Posterior cingulate gyrus (tissue), 11 donors: ENCODE measurements at regions of chr11 and their contacts with region 1.

Region 1: GRCh38 chr11:120511116-120511819 is at the start of gene GRIK4:
- DNase-seq: peak; percentile 78 to 98 (median 92)

Region 2: DNA sequence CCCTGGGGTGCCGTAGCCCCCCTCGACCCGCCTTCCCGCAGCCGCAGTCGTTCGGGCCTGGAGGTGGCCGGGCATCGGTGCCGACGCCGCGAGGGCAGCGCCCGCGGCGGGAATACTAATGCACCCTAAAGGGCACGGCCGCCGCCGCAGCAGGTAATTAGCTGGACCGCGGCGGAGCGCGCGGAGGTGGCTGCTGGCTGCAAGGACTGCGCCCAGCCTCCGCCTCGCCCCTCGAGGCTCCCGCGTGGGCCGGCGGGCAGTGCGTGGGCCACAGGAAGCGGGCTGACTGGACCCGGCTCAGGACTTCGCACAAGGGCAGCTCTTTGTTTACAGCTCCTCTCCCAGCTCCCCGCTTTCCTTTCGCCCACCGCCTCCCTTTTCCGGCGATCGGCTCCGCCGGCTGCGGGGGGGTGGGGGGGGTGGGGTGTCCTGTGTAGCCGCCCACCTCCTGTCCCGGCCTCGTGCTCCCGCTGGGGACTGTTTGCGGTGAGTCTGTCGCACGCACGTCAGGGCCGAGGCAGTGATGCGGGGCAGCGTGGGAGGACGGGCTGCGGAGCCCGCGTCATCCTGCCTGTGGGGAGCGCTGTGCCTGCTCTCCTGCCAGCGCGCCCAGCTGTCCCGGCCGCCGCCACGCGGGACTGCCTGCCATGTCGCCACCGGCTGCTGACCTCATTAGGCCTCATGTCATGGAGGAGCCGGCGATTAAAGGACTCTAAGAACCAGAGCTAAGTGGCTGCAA is 53.5 kb after region 1 on chr11:
- intact Hi-C with region 1: loop called (anchors 5 kb)
- DNase-seq: peak; percentile 61 to 97 (median 75)

Region 3: GRCh38 chr11:120696597-120697218 is 185.4 kb after region 1 on chr11:
- intact Hi-C with region 1: no loop called
- DNase-seq: no peak

Region 4: GRCh38 chr11:120801801-120802689 is 290.8 kb after region 1 on chr11:
- intact Hi-C with region 1: loop called (anchors 1 kb)
- DNase-seq: peak; percentile 50 to 95 (median 78)

Region 5: GRCh38 chr11:121067453-121067852 is 556.2 kb after region 1 on chr11:
- intact Hi-C with region 1: no loop called
- DNase-seq: no peak

Region 6: DNA sequence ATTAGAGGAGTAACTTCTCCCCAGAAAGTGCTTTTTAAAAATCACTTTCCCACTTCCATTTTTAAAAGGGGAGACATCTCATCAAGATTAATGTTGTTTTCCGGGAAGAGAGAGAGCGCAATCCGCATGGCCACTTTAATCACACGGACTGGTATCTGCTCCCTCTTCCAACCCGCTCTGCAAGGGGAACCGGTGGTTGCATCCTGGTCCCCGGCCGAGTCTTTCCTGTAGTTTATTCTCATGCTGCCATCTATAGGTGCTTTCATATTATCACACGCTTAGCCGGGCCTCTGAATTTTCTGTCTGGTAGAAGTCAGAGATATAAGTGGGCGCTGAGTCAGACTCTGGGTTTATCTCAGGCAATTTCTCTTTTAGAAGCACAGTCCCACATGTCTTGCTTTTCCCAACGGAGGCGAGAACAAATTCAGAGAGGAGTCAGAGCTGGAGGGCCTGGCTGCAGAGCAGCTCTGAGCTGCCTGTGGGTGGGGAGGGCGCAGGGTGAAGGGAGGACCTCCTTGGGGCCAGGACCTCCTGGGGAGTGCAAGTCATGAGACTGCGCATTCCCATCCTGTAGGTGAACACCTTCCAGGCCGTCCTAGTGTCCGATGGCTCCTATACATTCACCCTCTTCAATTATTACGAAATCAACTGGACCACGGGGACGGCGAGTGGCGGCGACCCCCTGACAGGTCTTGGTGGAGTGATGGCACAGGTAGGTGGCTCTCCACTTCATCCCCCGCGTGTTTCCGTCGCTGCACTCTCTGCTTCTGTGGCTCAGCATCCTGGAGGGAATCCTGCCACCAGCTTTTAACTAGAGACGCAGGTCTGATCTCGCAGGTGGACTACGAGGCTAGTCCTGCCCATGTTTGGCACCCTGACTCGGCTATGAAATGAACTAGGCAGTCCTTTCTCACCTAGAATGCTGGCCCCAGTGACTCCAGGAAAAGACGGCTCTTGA is 601.5 kb after region 1 on chr11:
- intact Hi-C with region 1: loop called (anchors 2 kb)
- DNase-seq: peak; percentile 35 to 94 (median 71)